Mammary epithelial cell (primary cell): ENCODE measurements at regions of chr6 and their contacts with region 1.

Region 1: DNA sequence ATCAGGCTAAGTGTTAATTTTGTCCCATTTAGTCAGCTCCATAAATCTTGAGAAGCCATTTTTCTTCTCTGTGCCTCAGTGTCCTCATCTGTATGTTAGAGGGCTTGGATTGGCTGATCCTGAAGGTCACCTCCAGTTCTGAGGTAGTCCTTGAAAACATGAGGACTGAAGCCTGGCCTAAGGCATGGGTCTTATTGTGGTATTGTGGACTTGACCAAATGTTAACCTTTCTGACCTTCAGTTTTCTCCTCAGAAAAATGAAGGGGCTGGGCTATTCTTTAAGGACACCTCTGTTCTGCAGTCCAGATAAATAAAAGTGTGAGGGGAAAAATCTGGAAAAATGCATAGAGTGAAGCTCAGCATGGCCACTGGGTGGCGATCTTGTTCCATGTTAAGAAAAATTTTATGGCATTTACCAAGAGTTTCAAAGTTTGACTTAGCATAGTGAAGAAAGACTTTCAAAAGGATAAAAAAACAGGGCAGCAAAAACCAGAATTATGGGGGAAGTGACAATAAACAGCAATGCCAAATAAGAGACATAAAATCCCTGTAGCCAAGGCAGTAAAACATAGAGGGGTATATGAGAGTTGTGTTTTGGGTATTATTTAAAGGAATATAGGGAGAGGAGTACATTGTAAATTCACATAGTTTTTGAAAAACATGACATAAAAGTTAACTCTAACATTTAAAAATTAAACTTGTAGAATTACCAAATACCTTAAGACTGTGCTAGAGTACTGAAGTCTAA is 13.2 kb upstream of the TFB1M start:
- DNase-seq: peak; percentile 32
- H3K4me3 ChIP-seq: no peak overlapping the region
- H3K27ac ChIP-seq: no peak overlapping the region
- H3K4me1 ChIP-seq: no peaks in the 10 kb centered on the region
- H3K27me3 ChIP-seq: no peaks in the 10 kb centered on the region
- CTCF ChIP-seq: peak; percentile 68 to 73

Region 2: GRCh38 chr6:155078331-155078745 is 249.2 kb before region 1 on chr6:
- CTCF ChIA-PET with region 1: no interaction called
- dilution Hi-C with region 1: no loop called
- in situ Hi-C with region 1: no loop called
- intact Hi-C with region 1: no loop called
- DNase-seq: no peak
- H3K4me3 ChIP-seq: no peak overlapping the region
- H3K27ac ChIP-seq: no peak overlapping the region
- H3K4me1 ChIP-seq: no peaks in the 10 kb centered on the region
- H3K27me3 ChIP-seq: no peaks in the 10 kb centered on the region
- CTCF ChIP-seq: no peak

Region 3: DNA sequence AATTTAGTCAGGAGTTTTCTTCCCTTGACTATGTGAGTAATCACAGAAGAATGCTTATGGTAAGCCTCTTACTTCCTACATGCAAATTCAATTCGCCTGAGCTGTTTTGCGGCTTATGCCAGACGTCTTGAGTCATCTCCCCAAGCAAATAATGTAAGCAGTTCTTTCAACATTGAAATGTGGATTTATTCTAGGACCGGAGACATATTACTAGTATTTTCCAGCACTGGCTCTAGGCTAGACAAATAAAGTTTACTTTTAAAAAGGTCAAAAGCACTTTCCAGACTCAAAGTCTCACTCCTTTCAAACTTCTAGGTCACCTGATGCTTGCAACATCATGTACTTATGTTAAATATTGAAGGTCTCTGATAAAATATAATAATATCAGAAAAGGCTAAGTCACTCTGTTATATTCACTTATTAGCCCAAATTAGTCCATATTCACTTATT is 166.2 kb after region 1 on chr6:
- CTCF ChIA-PET with region 1: no interaction called
- dilution Hi-C with region 1: no loop called
- in situ Hi-C with region 1: no loop called
- intact Hi-C with region 1: loop called (anchors 1 kb)
- DNase-seq: peak; percentile 95
- H3K4me3 ChIP-seq: no peak overlapping the region
- H3K27ac ChIP-seq: peak overlapping the region; percentile 85
- H3K4me1 ChIP-seq: peaks cover 29% of the 10 kb centered on the region
- H3K27me3 ChIP-seq: no peaks in the 10 kb centered on the region
- CTCF ChIP-seq: no peak

Region 4: GRCh38 chr6:155530219-155530834 is 202.8 kb after region 1 on chr6:
- CTCF ChIA-PET with region 1: interaction called, 5 read pairs
- dilution Hi-C with region 1: no loop called
- in situ Hi-C with region 1: loop called (anchors 5 kb)
- intact Hi-C with region 1: loop called (anchors 1 kb)
- DNase-seq: peak; percentile 31
- H3K4me3 ChIP-seq: no peak overlapping the region
- H3K27ac ChIP-seq: no peak overlapping the region
- H3K4me1 ChIP-seq: peaks cover 12% of the 10 kb centered on the region
- H3K27me3 ChIP-seq: no peaks in the 10 kb centered on the region
- CTCF ChIP-seq: peak; percentile 79 to 81

Region 5: GRCh38 chr6:156564127-156564806 is 1236.8 kb after region 1 on chr6:
- CTCF ChIA-PET with region 1: no interaction called
- dilution Hi-C with region 1: no loop called
- in situ Hi-C with region 1: loop called in 1 of 2 experiments (anchors 25 kb)
- intact Hi-C with region 1: loop called (anchors 5 kb)
- DNase-seq: peak; percentile 36
- H3K4me3 ChIP-seq: no peak overlapping the region
- H3K27ac ChIP-seq: no peak overlapping the region
- H3K4me1 ChIP-seq: no peaks in the 10 kb centered on the region
- H3K27me3 ChIP-seq: no peaks in the 10 kb centered on the region
- CTCF ChIP-seq: peak; percentile 87 to 96

Region 6: DNA sequence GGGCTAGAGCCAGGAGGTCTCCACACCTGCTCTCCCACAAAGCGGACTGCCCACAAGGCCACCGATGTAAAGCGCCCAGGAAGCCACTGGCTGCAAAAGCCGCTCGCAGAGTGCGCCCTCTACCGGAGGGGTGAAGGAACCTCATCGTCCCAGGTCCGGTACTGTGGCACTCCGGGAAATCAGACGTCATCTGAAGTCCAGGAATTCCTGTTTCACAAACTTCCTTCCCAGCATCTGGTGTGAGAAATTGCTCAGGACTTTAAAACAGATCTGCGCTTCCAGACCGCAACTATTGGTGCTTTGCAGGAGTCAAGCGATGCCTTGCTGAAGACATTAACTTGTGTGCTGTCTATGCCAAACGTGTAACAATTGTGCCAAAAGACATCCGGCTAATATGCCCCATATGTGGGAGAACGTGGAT is 1334.5 kb after region 1 on chr6:
- CTCF ChIA-PET with region 1: no interaction called
- dilution Hi-C with region 1: no loop called
- in situ Hi-C with region 1: no loop called
- intact Hi-C with region 1: loop called (anchors 5 kb)
- DNase-seq: peak; percentile 74
- H3K4me3 ChIP-seq: peak overlapping the region; percentile 32 to 42 (median 36)
- H3K27ac ChIP-seq: no peak overlapping the region
- H3K4me1 ChIP-seq: peaks cover 3% of the 10 kb centered on the region
- H3K27me3 ChIP-seq: peaks cover 2% of the 10 kb centered on the region
- CTCF ChIP-seq: peak; percentile 82 to 95

Region 7: DNA sequence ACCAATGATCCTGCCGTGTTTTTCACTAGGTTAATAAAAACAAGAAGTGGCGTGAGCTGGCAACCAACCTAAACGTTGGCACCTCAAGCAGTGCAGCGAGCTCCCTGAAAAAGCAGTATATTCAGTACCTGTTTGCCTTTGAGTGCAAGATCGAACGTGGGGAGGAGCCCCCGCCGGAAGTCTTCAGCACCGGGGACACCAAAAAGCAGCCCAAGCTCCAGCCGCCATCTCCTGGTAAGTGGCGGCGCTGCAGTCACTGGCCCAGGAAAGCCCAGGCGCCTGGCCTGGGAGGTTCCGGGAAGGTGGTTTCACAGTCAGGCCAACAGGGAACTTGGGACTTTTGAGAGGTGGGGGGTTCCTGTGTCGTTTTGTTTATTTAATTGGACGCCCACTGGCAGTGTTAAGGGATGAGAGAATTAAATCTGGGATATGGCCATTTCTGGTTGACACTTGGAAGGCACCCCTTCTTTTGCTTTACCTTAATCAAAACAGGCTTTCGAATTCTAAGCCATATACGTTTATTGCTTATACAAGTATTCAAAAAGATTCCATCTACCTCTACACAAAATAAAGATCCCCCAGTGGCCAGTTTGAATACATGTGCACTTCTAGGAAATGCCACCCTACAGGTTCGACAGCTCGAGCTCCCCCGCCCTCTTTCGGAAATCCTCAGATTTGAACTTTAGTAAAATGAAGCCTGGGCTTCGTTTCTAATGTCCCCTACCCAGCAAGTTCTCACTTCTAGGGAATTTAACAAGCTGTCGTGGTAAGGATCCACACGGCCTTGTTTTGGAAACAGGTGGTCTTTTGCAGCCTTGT is 1856.9 kb after region 1 on chr6:
- CTCF ChIA-PET with region 1: no interaction called
- dilution Hi-C with region 1: no loop called
- in situ Hi-C with region 1: no loop called
- intact Hi-C with region 1: loop called (anchors 2 kb)
- DNase-seq: peak; percentile 57
- H3K4me3 ChIP-seq: no peak overlapping the region
- H3K27ac ChIP-seq: no peak overlapping the region
- H3K4me1 ChIP-seq: peaks cover 10% of the 10 kb centered on the region
- H3K27me3 ChIP-seq: no peaks in the 10 kb centered on the region
- CTCF ChIP-seq: peak; percentile 93 to 98

Region 8: GRCh38 chr6:157274471-157275226 is 1947.1 kb after region 1 on chr6:
- CTCF ChIA-PET with region 1: no interaction called
- dilution Hi-C with region 1: no loop called
- in situ Hi-C with region 1: no loop called
- intact Hi-C with region 1: loop called (anchors 10 kb)
- DNase-seq: peak; percentile 59
- H3K4me3 ChIP-seq: peak overlapping the region; percentile 55 to 81 (median 66)
- H3K27ac ChIP-seq: no peak overlapping the region
- H3K4me1 ChIP-seq: peaks cover 7% of the 10 kb centered on the region
- H3K27me3 ChIP-seq: no peaks in the 10 kb centered on the region
- CTCF ChIP-seq: peak; percentile 55 to 60